HepG2 (cell line): ENCODE measurements at regions of chr17 and their contacts with region 1.

Region 1: GRCh38 chr17:69047368-69048263 is 13.1 kb downstream of the ABCA9 start:
- DNase-seq: peak; percentile 100
- ATAC-seq: peak; percentile 98
- H3K4me3 ChIP-seq: peak overlapping the region in 1 of 3 experiments; percentile 23; a peak in 1 of 6 replicates
- H3K27ac ChIP-seq: peak overlapping the region; percentile 93
- H3K4me1 ChIP-seq: peaks cover 73% of the 10 kb centered on the region
- H3K27me3 ChIP-seq: no peaks in the 10 kb centered on the region; a peak in 1 of 5 replicates
- CTCF ChIP-seq: no peak
- EP300 ChIP-seq: peak; percentile 87 to 99
- POLR2A ChIP-seq: no peak
- RAD21 ChIP-seq: no peak

Region 2: DNA sequence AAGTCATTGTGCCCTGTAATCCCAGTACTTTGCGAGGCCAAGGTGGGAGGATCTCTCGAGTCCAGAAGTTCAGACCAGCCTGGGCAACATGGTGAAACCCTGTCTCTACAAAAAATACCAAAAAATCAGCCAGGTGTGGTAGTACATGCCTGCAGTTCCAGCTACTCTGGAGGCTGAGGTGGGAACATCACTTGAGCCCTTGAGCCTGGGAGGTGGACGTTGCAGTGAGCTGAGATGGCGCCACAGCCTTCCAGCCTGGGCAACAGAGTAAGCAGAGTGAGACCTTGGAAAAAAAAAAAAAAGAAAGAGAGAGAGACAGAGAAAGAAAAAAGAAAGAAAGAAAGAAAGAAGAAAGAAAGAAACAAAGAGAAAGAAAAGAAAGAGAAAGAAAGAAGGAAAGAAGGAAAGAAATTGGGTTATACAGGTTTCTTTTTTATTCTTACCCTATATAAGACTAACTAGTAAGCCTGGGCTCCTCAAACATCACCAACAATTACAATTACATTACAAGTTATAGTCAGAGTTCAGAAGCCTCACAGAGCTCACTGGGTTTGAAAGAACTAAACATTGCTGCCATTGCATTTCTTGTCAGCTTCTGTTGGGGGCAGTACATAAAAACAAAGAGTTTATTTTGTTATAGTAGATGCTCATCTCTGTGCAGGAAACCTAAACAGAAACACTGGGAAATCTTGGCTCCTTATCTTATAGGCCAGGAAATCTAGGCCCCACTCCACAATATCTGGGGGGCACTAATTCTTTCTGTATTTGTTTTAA is 19.8 kb after region 1 on chr17:
- CTCF ChIA-PET with region 1: no interaction called
- POLR2A ChIA-PET with region 1: interaction called, 12 read pairs
- in situ Hi-C with region 1: no loop called
- intact Hi-C with region 1: no loop called
- DNase-seq: no peak
- ATAC-seq: no peak
- H3K4me3 ChIP-seq: no peak overlapping the region
- H3K27ac ChIP-seq: no peak overlapping the region
- H3K4me1 ChIP-seq: peaks cover 57% of the 10 kb centered on the region
- H3K27me3 ChIP-seq: no peaks in the 10 kb centered on the region
- CTCF ChIP-seq: 0 out of 2 replicates have a peak, but pooled peaks have one; percentile 7
- EP300 ChIP-seq: no peak
- POLR2A ChIP-seq: no peak
- RAD21 ChIP-seq: no peak